ENCODE measurements at regions of chr3 and their contacts with region 1.

Region 1: DNA sequence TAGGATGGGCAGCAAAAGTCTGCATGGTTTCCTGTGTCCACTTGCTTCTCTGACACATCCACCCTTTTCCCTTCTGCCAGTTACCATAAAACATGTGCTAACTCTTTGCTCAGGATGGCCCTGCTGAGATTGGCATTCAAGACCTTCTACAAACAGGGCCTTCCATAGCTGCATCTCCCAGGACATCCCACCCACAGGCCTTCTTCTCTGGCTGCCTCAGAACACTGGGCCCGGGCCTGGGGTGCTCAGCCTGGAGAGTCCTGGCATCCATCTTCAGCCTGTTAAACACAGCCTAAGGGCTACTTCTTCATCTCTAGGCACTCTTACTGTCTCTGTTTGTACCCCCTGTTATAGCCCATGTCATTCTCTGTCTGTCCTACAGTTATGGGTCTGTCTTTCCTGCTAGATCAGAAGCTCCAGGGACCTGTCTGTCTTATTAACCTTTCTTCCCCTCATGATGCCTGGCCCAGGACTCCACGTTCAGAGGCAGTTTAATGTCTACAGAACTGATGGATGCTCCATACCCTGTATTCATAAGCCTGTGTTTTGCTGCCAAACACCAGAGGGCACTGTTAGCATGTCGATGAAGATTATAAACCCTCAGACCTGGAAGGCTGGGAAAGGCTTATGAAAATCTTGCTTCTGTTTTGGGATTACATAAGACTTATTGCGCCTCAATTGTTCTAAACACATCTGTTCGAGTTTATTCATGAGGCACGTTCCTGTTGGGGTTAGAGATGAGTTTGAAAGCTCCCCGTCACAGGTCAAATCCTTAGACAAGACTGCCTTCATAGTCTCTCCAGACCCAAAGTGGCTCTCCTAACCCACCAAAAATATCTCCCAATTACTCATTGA is 16.5 kb downstream of the SEMA3G start:
- DNase-seq: peak; percentile 63 to 65
- H3K4me3 ChIP-seq: no peak overlapping the region
- H3K4me3 Mint-ChIP-seq: no peak overlapping the region
- H3K27ac Mint-ChIP-seq: no peak overlapping the region
- H3K4me1 ChIP-seq: peaks cover 15% of the 10 kb centered on the region
- H3K4me1 Mint-ChIP-seq: no peaks in the 10 kb centered on the region
- H3K27me3 ChIP-seq: no peaks in the 10 kb centered on the region
- H3K27me3 Mint-ChIP-seq: no peaks in the 10 kb centered on the region
- CTCF ChIP-seq: peak; percentile 65 to 80

Region 2: DNA sequence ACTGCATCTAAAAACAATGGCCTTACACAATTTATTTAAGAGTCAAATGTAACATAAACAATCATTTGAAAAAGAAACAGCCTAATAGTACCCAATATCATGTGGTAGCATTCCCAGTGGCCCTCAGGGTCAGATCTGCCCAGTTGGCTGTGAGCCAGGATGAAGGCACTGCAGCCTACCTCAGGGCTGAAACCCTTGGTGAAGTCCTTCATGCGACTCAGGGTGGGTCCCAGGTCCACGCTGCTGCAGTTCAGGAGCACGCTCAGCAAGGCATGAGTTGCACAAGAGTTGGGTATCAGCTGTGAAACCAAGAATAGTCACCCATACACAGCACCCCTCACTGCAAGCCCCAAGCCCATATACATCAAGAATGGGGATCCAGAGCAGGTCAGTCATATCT is 20.6 kb before region 1 on chr3:
- CTCF ChIA-PET with region 1: interaction called, 6 read pairs
- POLR2A ChIA-PET with region 1: no interaction called
- intact Hi-C with region 1: loop called (anchors 1 kb)
- DNase-seq: no peak
- H3K4me3 ChIP-seq: no peak overlapping the region
- H3K4me3 Mint-ChIP-seq: no peak overlapping the region
- H3K27ac Mint-ChIP-seq: no peak overlapping the region
- H3K4me1 ChIP-seq: peaks cover 8% of the 10 kb centered on the region
- H3K4me1 Mint-ChIP-seq: peaks cover 13% of the 10 kb centered on the region
- H3K27me3 ChIP-seq: no peaks in the 10 kb centered on the region
- H3K27me3 Mint-ChIP-seq: no peaks in the 10 kb centered on the region
- CTCF ChIP-seq: no peak

Region 3: GRCh38 chr3:52444860-52445793 is 16.7 kb after region 1 on chr3 and contains the start of gene SEMA3G:
- CTCF ChIA-PET with region 1: interaction called, 5 read pairs
- POLR2A ChIA-PET with region 1: no interaction called
- intact Hi-C with region 1: loop called (anchors 1 kb)
- DNase-seq: peak; percentile 57 to 66
- H3K4me3 ChIP-seq: no peak within 1 kb of the TSS
- H3K4me3 Mint-ChIP-seq: no peak within 1 kb of the TSS
- H3K27ac Mint-ChIP-seq: no peak within 1 kb of the TSS
- H3K4me1 ChIP-seq: peaks cover 11% of the 10 kb centered on the region
- H3K4me1 Mint-ChIP-seq: peaks cover 7% of the 10 kb centered on the region
- H3K27me3 ChIP-seq: no peaks in the 10 kb centered on the region
- H3K27me3 Mint-ChIP-seq: no peaks in the 10 kb centered on the region
- CTCF ChIP-seq: peak; percentile 17 to 26
- total RNA-seq, gene SEMA3G: 0.28 and 0.32 TPM in 2 replicates

Region 4: GRCh38 chr3:52455283-52456168 is 27.1 kb after region 1 on chr3 and contains the start of gene NISCH:
- CTCF ChIA-PET with region 1: interaction called, 10 read pairs
- POLR2A ChIA-PET with region 1: no interaction called
- intact Hi-C with region 1: no loop called
- DNase-seq: peak; percentile 90 to 97
- H3K4me3 ChIP-seq: peak within 1 kb of the TSS; percentile 94
- H3K4me3 Mint-ChIP-seq: peak within 1 kb of the TSS; percentile 88
- H3K27ac Mint-ChIP-seq: peak within 1 kb of the TSS; percentile 84
- H3K4me1 ChIP-seq: peaks cover 59% of the 10 kb centered on the region
- H3K4me1 Mint-ChIP-seq: peaks cover 41% of the 10 kb centered on the region
- H3K27me3 ChIP-seq: no peaks in the 10 kb centered on the region
- H3K27me3 Mint-ChIP-seq: no peaks in the 10 kb centered on the region
- CTCF ChIP-seq: no peak
- total RNA-seq, gene NISCH: 61.1 and 62.2 TPM in 2 replicates

Region 5: DNA sequence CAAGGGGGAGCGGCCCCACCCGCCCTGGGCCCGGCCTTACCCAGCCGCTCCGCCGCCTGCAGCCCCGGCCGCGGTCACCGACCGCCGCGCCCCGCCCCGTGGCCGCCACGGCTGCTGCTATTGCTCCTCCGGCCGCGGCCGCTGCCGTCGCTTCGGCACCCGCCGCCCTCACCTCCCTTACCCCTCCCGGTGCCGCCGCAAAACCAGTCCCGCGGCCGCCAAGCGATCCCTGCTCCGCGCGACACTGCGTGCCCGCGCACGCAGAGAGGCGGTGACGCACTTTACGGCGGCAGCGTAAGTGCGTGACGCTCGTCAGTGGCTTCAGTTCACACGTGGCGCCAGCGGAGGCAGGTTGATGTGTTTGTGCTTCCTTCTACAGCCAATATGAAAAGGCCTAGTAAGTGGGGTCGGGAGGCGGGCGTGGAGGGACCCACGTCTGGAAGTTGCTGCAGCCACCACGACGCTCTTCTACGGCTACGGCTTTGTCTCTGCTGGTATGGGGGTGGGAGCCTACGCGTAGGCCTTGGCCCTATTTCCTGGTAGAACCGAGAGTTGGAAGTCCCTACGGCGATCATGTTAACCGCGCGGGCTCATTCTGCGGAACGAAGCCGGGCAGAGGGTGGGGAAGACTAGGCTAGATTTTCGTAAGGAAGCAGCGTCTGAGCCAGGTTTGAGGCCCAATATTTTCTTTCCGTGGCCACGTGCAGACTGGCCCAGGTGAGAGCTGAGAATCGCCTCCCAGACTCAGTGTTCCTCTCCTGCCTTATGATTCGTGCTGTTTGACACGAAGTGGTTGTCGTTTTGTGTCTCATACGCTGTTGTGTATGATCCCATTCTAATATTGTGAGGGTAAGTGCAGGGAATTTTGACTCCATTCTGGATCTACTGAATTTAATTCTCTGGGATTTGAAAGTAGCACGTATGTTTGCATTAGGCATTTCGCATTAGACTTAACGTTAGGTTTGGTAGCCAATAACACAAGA is 257.6 kb after region 1 on chr3 and contains the starts of genes GNL3 and PBRM1:
- CTCF ChIA-PET with region 1: no interaction called
- POLR2A ChIA-PET with region 1: interaction called, 15 read pairs
- intact Hi-C with region 1: loop called (anchors 10 kb)
- DNase-seq: peak; percentile 94 to 95
- H3K4me3 ChIP-seq: peak within 1 kb of the TSS; percentile 98
- H3K4me3 Mint-ChIP-seq: peak within 1 kb of the TSS; percentile 85
- H3K27ac Mint-ChIP-seq: peak within 1 kb of the TSS; percentile 96
- H3K4me1 ChIP-seq: peaks cover 41% of the 10 kb centered on the region
- H3K4me1 Mint-ChIP-seq: peaks cover 19% of the 10 kb centered on the region
- H3K27me3 ChIP-seq: no peaks in the 10 kb centered on the region
- H3K27me3 Mint-ChIP-seq: no peaks in the 10 kb centered on the region
- CTCF ChIP-seq: no peak
- total RNA-seq, gene GNL3: 125 and 134 TPM in 2 replicates
- total RNA-seq, gene PBRM1: 50.6 and 50.7 TPM in 2 replicates

Region 6: DNA sequence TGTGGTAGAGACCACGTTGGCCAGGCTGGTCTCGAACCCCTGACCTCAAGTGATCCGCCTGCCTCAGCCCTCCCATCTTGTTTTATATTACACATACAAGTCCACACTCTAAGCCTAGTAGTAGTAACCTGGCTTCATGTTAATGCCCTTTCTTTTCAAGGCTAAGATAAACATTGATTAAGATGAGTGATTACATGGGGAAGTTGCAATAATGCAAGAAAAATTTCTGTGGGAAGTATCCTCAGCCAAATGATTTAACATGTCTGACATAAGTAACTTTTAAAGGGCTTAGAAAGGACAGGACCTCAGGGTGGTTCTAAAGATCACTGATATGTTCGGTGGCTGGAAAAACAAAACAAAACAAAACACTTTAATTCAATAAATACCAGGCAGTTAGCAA is 545.4 kb after region 1 on chr3:
- CTCF ChIA-PET with region 1: no interaction called
- POLR2A ChIA-PET with region 1: no interaction called
- intact Hi-C with region 1: no loop called
- DNase-seq: no peak
- H3K4me3 ChIP-seq: no peak overlapping the region
- H3K4me3 Mint-ChIP-seq: no peak overlapping the region
- H3K27ac Mint-ChIP-seq: no peak overlapping the region
- H3K4me1 ChIP-seq: peaks cover 12% of the 10 kb centered on the region; the same call in 1 of the 2 replicates
- H3K4me1 Mint-ChIP-seq: no peaks in the 10 kb centered on the region
- H3K27me3 ChIP-seq: no peaks in the 10 kb centered on the region
- H3K27me3 Mint-ChIP-seq: no peaks in the 10 kb centered on the region
- CTCF ChIP-seq: no peak

Measured in Caco-2 (cell line).